GM12878 (cell line): ENCODE measurements at regions of chr5 and their contacts with region 1.

Region 1: DNA sequence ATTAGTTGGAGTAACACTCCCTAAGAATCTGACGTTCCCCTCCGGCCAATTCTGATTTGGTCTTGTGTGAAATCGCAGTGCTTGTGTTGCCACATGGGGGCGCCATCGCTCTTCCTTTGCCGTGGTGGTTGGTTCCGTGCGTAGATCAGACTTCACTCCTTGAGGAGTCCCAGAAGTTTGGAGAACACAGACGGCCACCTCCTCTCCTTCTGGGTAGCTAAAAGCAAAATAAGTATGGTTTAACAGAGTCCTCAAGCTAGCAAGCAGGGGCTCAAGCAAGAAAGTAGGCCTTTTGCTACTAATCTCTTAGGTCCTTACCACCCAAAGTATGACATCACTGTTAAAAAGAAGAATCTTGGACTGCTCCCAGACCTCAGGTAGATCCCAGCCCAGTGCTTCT is 59.5 kb downstream of the HSPA4 start:
- DNase-seq: peak; percentile 45
- ATAC-seq: peak; percentile 84
- H3K4me3 ChIP-seq: no peak overlapping the region
- H3K27ac ChIP-seq: no peak overlapping the region
- H3K4me1 ChIP-seq: peaks cover 14% of the 10 kb centered on the region
- H3K27me3 ChIP-seq: no peaks in the 10 kb centered on the region
- CTCF ChIP-seq: peak; percentile 88 to 99 (median 92); a peak in 5 of 6 replicates
- EP300 ChIP-seq: no peak
- POLR2A ChIP-seq: no peak
- RAD21 ChIP-seq: peak; percentile 99

Region 2: GRCh38 chr5:133056891-133057290 is 54.4 kb before region 1 on chr5:
- CTCF ChIA-PET with region 1: no interaction called
- POLR2A ChIA-PET with region 1: interaction called, 11 read pairs
- RAD21 ChIA-PET with region 1: no interaction called
- SMC1A ChIA-PET with region 1: no interaction called
- in situ Hi-C with region 1: no loop called
- intact Hi-C with region 1: no loop called
- DNase-seq: no peak
- ATAC-seq: no peak
- H3K4me3 ChIP-seq: no peak overlapping the region
- H3K27ac ChIP-seq: no peak overlapping the region
- H3K4me1 ChIP-seq: peaks cover 5% of the 10 kb centered on the region; the same call in 1 of the 2 replicates
- H3K27me3 ChIP-seq: no peaks in the 10 kb centered on the region
- CTCF ChIP-seq: no peak
- EP300 ChIP-seq: no peak
- POLR2A ChIP-seq: no peak
- RAD21 ChIP-seq: no peak

Region 3: GRCh38 chr5:133075572-133076536 is 35.4 kb before region 1 on chr5:
- CTCF ChIA-PET with region 1: no interaction called
- POLR2A ChIA-PET with region 1: no interaction called
- RAD21 ChIA-PET with region 1: no interaction called
- SMC1A ChIA-PET with region 1: no interaction called
- in situ Hi-C with region 1: no loop called
- intact Hi-C with region 1: no loop called
- DNase-seq: no peak
- ATAC-seq: no peak
- H3K4me3 ChIP-seq: no peak overlapping the region
- H3K27ac ChIP-seq: no peak overlapping the region
- H3K4me1 ChIP-seq: no peaks in the 10 kb centered on the region
- H3K27me3 ChIP-seq: no peaks in the 10 kb centered on the region
- CTCF ChIP-seq: no peak
- EP300 ChIP-seq: no peak
- POLR2A ChIP-seq: no peak
- RAD21 ChIP-seq: no peak

Region 4: GRCh38 chr5:133199417-133200178 is 88.3 kb after region 1 on chr5:
- CTCF ChIA-PET with region 1: no interaction called
- POLR2A ChIA-PET with region 1: no interaction called
- RAD21 ChIA-PET with region 1: no interaction called
- SMC1A ChIA-PET with region 1: no interaction called
- in situ Hi-C with region 1: no loop called
- intact Hi-C with region 1: no loop called
- DNase-seq: no peak
- ATAC-seq: no peak
- H3K4me3 ChIP-seq: no peak overlapping the region
- H3K27ac ChIP-seq: no peak overlapping the region
- H3K4me1 ChIP-seq: no peaks in the 10 kb centered on the region
- H3K27me3 ChIP-seq: no peaks in the 10 kb centered on the region; a peak in 1 of 4 replicates
- CTCF ChIP-seq: no peak
- EP300 ChIP-seq: no peak
- POLR2A ChIP-seq: no peak
- RAD21 ChIP-seq: no peak

Region 5: GRCh38 chr5:133247881-133248624 is 136.8 kb after region 1 on chr5:
- CTCF ChIA-PET with region 1: interaction called, 9 read pairs
- POLR2A ChIA-PET with region 1: no interaction called
- RAD21 ChIA-PET with region 1: interaction called, 11 read pairs
- SMC1A ChIA-PET with region 1: interaction called, 8 read pairs
- in situ Hi-C with region 1: no loop called
- intact Hi-C with region 1: loop called (anchors 5 kb)
- DNase-seq: no peak
- ATAC-seq: no peak
- H3K4me3 ChIP-seq: no peak overlapping the region
- H3K27ac ChIP-seq: no peak overlapping the region
- H3K4me1 ChIP-seq: peaks cover 14% of the 10 kb centered on the region
- H3K27me3 ChIP-seq: no peaks in the 10 kb centered on the region
- CTCF ChIP-seq: peak in 2 of 3 experiments; percentile 22 to 29; a peak in 2 of 6 replicates
- EP300 ChIP-seq: no peak
- POLR2A ChIP-seq: no peak
- RAD21 ChIP-seq: no peak

Region 6: DNA sequence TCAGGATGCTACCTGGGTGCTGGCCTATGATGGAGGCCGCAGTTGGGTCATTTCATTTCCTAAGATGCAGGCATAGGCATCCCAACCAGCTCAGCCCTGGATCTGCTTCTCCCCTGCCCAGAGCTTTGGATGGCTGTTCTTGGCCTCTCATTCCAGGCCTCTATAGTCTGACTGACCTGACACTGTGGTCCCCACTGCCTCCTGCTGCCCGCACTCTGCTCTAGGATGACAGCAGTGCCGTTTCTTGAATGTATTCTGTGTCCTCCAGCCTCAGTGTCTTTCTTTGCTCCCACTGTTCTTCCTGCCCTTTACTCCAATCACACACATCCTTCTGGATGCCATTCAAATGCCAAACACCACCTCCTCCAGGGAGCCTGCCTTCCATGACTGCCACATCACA is 176.2 kb after region 1 on chr5:
- CTCF ChIA-PET with region 1: interaction called, 26 read pairs
- POLR2A ChIA-PET with region 1: no interaction called
- RAD21 ChIA-PET with region 1: interaction called, 38 read pairs
- SMC1A ChIA-PET with region 1: interaction called, 4 read pairs
- in situ Hi-C with region 1: loop called (anchors 5 kb)
- intact Hi-C with region 1: loop called (anchors 1 kb)
- DNase-seq: no peak
- ATAC-seq: peak; percentile 83
- H3K4me3 ChIP-seq: no peak overlapping the region
- H3K27ac ChIP-seq: no peak overlapping the region
- H3K4me1 ChIP-seq: no peaks in the 10 kb centered on the region
- H3K27me3 ChIP-seq: no peaks in the 10 kb centered on the region
- CTCF ChIP-seq: peak; percentile 37 to 53 (median 50)
- EP300 ChIP-seq: no peak
- POLR2A ChIP-seq: no peak
- RAD21 ChIP-seq: peak; percentile 72

Region 7: GRCh38 chr5:133347039-133347438 is 235.7 kb after region 1 on chr5:
- CTCF ChIA-PET with region 1: interaction called, 10 read pairs
- POLR2A ChIA-PET with region 1: no interaction called
- RAD21 ChIA-PET with region 1: interaction called, 4 read pairs
- SMC1A ChIA-PET with region 1: interaction called, 10 read pairs
- in situ Hi-C with region 1: no loop called
- intact Hi-C with region 1: loop called (anchors 1 kb)
- DNase-seq: no peak
- ATAC-seq: peak; percentile 91
- H3K4me3 ChIP-seq: no peak overlapping the region
- H3K27ac ChIP-seq: no peak overlapping the region
- H3K4me1 ChIP-seq: no peaks in the 10 kb centered on the region
- H3K27me3 ChIP-seq: no peaks in the 10 kb centered on the region; a peak in 1 of 4 replicates
- CTCF ChIP-seq: peak; percentile 33 to 57 (median 40); a peak in 4 of 6 replicates
- EP300 ChIP-seq: no peak
- POLR2A ChIP-seq: no peak
- RAD21 ChIP-seq: peak; percentile 43; the same call in 1 of the 2 replicates

Region 8: DNA sequence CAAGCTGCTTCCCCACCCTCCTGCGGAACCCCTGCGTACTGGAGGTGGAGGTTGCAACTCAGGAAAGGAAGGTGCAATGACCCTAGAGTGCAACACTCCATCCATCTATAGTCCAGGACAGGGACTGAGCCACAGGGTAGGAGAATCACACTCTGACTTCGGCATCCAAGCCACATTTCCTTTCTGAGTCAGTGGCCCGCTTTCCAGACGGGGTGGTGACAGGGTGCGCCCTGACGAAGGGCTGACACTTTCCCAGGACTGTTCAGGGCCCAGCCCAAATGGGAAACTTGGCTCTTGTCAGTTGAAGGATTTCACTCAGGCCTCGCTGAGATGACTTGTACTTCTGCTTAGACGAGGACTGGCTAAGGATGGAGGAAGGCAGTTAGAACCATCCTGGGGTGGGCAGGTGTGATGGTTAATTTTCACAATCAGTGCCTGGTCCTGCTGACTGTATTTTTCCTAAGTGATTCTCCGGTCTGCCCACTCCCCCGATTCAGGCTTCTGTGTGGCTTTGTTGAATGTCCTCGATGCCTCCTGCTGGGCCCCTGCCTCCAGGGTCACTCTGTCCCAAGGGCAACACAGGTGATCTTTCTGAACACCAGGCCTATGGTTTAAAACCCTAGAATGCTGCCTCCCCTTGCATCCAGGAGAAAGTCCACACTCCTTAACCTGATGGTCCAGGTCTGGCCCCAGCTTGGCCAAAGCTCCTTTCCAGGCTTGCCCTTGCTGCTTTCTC is 273.0 kb after region 1 on chr5:
- CTCF ChIA-PET with region 1: no interaction called
- POLR2A ChIA-PET with region 1: no interaction called
- RAD21 ChIA-PET with region 1: no interaction called
- SMC1A ChIA-PET with region 1: no interaction called
- in situ Hi-C with region 1: no loop called
- intact Hi-C with region 1: no loop called
- DNase-seq: no peak
- ATAC-seq: no peak
- H3K4me3 ChIP-seq: no peak overlapping the region
- H3K27ac ChIP-seq: no peak overlapping the region
- H3K4me1 ChIP-seq: no peaks in the 10 kb centered on the region
- H3K27me3 ChIP-seq: peaks cover 0 to 1% of the 10 kb centered on the region in 2 experiments; a peak in 2 of 4 replicates
- CTCF ChIP-seq: no peak
- EP300 ChIP-seq: no peak
- POLR2A ChIP-seq: no peak
- RAD21 ChIP-seq: no peak

Region 9: GRCh38 chr5:133460172-133460758 is 349.0 kb after region 1 on chr5:
- CTCF ChIA-PET with region 1: interaction called, 19 read pairs
- POLR2A ChIA-PET with region 1: no interaction called
- RAD21 ChIA-PET with region 1: interaction called, 4 read pairs
- SMC1A ChIA-PET with region 1: interaction called, 8 read pairs
- in situ Hi-C with region 1: loop called (anchors 5 kb)
- intact Hi-C with region 1: loop called (anchors 2 kb)
- DNase-seq: no peak
- ATAC-seq: peak; percentile 80
- H3K4me3 ChIP-seq: no peak overlapping the region
- H3K27ac ChIP-seq: no peak overlapping the region
- H3K4me1 ChIP-seq: no peaks in the 10 kb centered on the region
- H3K27me3 ChIP-seq: no peaks in the 10 kb centered on the region; a peak in 2 of 4 replicates
- CTCF ChIP-seq: peak; percentile 70 to 79 (median 76)
- EP300 ChIP-seq: no peak
- POLR2A ChIP-seq: no peak
- RAD21 ChIP-seq: peak; percentile 78